SK-N-SH (cell line): ENCODE measurements at regions of chr1 and their contacts with region 1.

Region 1: DNA sequence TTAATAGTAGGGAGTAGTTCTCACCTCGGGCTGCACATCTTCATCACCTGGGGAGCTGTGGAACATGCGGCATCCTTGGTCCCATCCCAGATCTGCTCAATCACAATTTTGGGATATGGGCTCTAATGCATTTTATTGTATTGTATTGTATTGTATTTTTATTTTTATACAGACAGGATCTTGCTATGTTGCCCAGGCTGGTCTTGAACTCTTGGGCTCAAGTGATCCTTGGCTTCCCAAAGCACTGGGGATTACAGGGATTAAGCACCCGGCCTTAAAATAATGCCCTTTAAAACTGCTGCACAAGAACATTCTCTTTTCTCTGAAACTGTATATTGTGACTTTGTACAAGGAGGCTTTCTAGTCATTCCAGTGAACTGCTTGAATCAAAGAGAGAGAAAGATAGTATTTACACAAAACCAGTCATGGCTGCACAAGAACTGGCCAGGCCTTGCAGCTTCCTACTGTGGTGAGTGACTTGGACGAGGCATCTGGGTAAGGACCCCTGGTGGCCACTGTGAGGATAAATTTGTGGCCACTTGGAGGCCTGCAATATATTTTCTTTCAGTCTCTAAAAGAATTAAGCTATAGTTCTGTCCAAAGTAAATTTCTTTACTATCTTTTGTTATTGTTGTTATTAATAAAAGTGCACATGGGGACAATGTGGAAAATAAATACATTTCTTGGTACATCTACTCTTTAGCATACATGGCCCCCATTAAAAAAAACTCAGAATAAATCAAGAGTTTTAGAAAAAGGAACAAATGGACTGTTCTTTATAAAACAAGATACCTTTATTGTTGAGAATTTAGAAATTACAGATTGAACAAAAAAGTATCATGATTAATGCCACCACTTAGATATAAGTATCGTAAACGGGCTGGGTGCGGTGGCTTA is 48.0 kb downstream of the TBCE start:
- DNase-seq: peak; percentile 73
- H3K4me3 ChIP-seq: no peak overlapping the region
- H3K27ac ChIP-seq: no peak overlapping the region; a peak in 1 of 4 replicates
- H3K4me1 ChIP-seq: peaks cover 0 to 4% of the 10 kb centered on the region in 2 experiments; a peak in 2 of 4 replicates
- H3K27me3 ChIP-seq: no peaks in the 10 kb centered on the region
- CTCF ChIP-seq: peak; percentile 89
- EP300 ChIP-seq: no peak
- RAD21 ChIP-seq: peak; percentile 76

Region 2: DNA sequence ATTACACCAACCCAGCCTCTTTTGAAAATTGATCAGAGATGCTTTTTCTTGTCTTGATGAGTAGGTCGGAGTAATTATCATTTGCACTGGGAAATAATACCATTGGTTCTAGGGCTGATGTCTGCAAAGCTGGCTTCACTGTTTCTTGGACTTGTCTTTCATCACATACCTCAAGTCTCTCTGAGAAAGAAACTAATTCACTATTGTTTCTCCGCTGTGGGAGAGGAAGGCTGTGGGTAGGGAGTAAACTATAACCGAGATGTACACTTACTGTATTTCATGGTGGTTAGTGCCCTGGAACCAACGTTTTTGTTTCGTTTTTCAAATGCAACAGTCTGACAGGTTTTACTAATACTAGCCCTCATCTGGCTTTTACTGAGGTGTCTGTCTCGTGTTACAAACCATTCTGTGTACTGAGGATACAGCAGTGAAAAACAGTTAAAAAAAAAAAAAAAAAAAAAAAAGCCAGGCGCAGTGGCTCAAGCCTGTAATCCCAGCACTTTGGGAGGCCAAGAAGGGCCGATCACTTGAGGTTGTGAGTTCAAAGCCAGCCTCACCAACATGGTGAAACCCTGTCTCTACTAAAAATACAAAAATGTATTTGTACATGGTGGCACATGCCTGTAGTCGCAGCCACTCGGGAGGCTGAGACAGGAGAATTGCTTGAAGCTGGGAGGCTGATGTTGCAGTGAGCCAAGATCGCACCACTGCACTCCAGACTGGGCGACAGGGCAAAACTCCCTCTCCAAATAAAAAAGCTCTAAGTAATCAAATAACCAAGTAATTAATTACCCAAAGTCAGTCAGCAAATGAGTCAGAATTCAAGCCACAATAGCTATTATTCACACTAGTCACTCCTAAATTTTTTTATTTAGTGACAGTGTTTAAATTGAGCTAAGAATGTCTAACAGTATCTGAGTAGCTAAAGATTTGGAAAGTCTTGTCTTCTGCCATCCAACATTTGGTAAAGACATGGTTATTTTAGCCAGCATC is 309.9 kb before region 1 on chr1:
- CTCF ChIA-PET with region 1: interaction called, 15 read pairs
- POLR2A ChIA-PET with region 1: no interaction called
- DNase-seq: no peak
- H3K4me3 ChIP-seq: no peak overlapping the region
- H3K27ac ChIP-seq: no peak overlapping the region
- H3K4me1 ChIP-seq: peaks cover 0 to 2% of the 10 kb centered on the region in 2 experiments; a peak in 1 of 4 replicates
- H3K27me3 ChIP-seq: no peaks in the 10 kb centered on the region
- CTCF ChIP-seq: no peak
- EP300 ChIP-seq: no peak
- RAD21 ChIP-seq: no peak

Region 3: GRCh38 chr1:235246022-235246991 is 168.9 kb before region 1 on chr1:
- CTCF ChIA-PET with region 1: interaction called, 19 read pairs
- POLR2A ChIA-PET with region 1: no interaction called
- DNase-seq: no peak
- H3K4me3 ChIP-seq: no peak overlapping the region
- H3K27ac ChIP-seq: peak overlapping the region in 1 of 2 experiments; percentile 36; a peak in 2 of 4 replicates
- H3K4me1 ChIP-seq: no peaks in the 10 kb centered on the region; a peak in 1 of 4 replicates
- H3K27me3 ChIP-seq: no peaks in the 10 kb centered on the region
- CTCF ChIP-seq: no peak
- EP300 ChIP-seq: no peak
- RAD21 ChIP-seq: no peak

Region 4: DNA sequence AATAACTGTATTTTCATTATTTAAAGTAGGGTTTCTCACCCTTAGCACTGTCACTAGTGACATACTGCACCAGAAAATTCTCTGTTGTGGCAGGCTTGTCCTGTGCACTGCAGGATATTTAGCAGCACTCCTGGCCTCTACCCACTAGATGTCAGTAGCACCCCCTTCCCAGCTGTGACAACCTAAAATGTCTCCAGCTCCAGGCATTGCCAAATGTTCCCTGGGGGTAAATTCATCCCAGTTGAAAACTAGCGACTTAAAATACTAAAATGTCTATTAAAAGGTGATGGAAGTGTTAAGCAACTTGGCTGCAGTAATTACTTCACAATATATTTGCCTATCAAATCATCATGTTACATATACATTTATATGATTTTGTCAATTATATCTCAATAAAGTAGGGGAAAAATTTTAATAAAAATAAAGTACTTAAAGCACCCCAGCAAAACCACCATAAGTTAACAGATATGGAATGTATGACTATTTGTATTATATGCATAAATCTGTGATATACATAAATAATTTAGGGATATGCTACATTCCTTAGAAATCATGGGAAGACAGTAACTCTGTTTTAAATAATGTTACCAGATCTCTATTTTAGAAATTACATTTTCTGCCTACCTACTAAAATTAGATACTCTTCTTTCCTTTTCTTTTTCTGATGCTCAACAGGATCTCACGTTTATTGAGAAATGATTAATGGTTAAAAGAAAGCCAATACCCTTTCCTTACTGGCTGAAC is 161.9 kb before region 1 on chr1:
- CTCF ChIA-PET with region 1: interaction called, 19 read pairs
- POLR2A ChIA-PET with region 1: no interaction called
- DNase-seq: peak; percentile 50
- H3K4me3 ChIP-seq: no peak overlapping the region; a peak in 1 of 4 replicates
- H3K27ac ChIP-seq: no peak overlapping the region
- H3K4me1 ChIP-seq: no peaks in the 10 kb centered on the region; a peak in 1 of 4 replicates
- H3K27me3 ChIP-seq: no peaks in the 10 kb centered on the region
- CTCF ChIP-seq: peak; percentile 94
- EP300 ChIP-seq: no peak
- RAD21 ChIP-seq: peak; percentile 89

Region 5: DNA sequence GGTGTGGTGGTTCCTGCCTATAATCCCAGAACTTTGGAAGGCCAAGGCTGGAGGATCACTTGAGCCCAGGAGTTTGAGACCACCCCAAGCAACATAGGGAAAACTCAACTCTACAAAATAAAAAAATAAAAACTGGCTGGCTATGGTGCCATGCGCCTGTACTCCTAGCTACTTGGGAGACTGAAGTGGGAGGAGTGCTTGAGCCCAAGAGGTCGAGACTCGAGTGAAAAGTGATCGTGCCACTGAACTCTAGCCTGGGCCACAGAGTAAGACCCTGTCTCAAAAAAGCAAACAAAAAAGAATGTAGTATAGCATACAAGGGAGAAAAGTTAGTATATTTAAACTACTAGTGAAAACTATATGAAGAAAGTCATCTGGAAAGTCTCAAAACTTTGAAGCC is 154.0 kb before region 1 on chr1:
- CTCF ChIA-PET with region 1: interaction called, 10 read pairs
- POLR2A ChIA-PET with region 1: no interaction called
- DNase-seq: no peak
- H3K4me3 ChIP-seq: no peak overlapping the region
- H3K27ac ChIP-seq: no peak overlapping the region
- H3K4me1 ChIP-seq: no peaks in the 10 kb centered on the region; a peak in 2 of 4 replicates
- H3K27me3 ChIP-seq: no peaks in the 10 kb centered on the region
- CTCF ChIP-seq: no peak
- EP300 ChIP-seq: no peak
- RAD21 ChIP-seq: no peak

Region 6: GRCh38 chr1:235328357-235329138 is 86.7 kb before region 1 on chr1 and contains the start of gene GGPS1:
- CTCF ChIA-PET with region 1: interaction called, 33 read pairs
- POLR2A ChIA-PET with region 1: interaction called, 5 read pairs
- DNase-seq: peak; percentile 92
- H3K4me3 ChIP-seq: peak within 1 kb of the TSS; percentile 86
- H3K27ac ChIP-seq: peak within 1 kb of the TSS; percentile 96 to 99
- H3K4me1 ChIP-seq: peaks cover 13 to 28% of the 10 kb centered on the region in 2 experiments; a peak in 3 of 4 replicates
- H3K27me3 ChIP-seq: no peaks in the 10 kb centered on the region
- CTCF ChIP-seq: no peak; the same call in 1 of the 2 replicates
- EP300 ChIP-seq: peak; percentile 8 to 13; a peak in 1 of 4 replicates
- RAD21 ChIP-seq: no peak
- polyA plus RNA-seq, gene GGPS1: 15.7 and 18.5 TPM in 2 replicates

Region 7: DNA sequence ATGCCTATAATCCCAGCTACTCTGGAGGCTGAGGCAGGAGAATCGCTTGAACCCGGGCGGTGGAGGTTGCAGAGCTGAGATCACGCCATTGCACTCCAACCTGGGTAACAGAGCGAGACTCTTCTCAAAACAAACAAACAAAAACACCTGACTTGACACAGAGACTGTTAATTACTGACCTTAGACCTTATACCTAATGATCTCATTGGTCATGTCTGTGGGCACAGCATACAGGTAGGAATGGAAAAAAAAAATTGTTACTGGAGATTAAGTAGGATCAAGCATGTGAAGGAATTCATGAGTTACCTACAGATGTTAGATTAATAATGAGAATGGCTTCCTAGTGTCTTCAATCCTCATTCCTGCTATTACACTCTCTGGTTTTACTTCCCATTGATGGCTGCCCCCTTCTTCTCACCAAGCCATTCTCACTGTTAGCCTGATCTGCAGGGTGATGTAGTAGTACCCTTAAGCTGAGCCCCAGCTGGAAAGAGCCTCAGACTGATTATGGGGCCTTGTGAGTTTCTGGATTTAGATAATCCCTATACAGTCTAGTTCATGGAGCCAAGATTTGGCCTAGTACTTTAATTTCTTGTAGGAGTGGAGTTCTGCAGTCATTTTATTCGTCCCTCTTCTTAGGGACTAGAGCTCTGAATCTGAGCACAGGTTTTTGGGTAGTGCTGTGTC is 39.2 kb before region 1 on chr1:
- CTCF ChIA-PET with region 1: interaction called, 13 read pairs
- POLR2A ChIA-PET with region 1: no interaction called
- DNase-seq: no peak
- H3K4me3 ChIP-seq: no peak overlapping the region
- H3K27ac ChIP-seq: no peak overlapping the region
- H3K4me1 ChIP-seq: no peaks in the 10 kb centered on the region
- H3K27me3 ChIP-seq: no peaks in the 10 kb centered on the region
- CTCF ChIP-seq: no peak
- EP300 ChIP-seq: no peak
- RAD21 ChIP-seq: no peak